SK-N-SH (cell line): ENCODE measurements at regions of chr21 and their contacts with region 1.

Region 1: GRCh38 chr21:33924079-33924765 is 8.6 kb upstream of the ATP5PO start:
- DNase-seq: peak; percentile 79
- H3K4me3 ChIP-seq: no peak overlapping the region; a peak in 1 of 4 replicates
- H3K27ac ChIP-seq: no peak overlapping the region; a peak in 1 of 4 replicates
- H3K4me1 ChIP-seq: peaks cover 5 to 10% of the 10 kb centered on the region in 2 experiments; a peak in 1 of 4 replicates
- H3K27me3 ChIP-seq: no peaks in the 10 kb centered on the region
- CTCF ChIP-seq: peak; percentile 92
- EP300 ChIP-seq: no peak
- RAD21 ChIP-seq: peak; percentile 99

Region 2: GRCh38 chr21:33947451-33948095 is 23.4 kb after region 1 on chr21:
- CTCF ChIA-PET with region 1: interaction called, 26 read pairs
- POLR2A ChIA-PET with region 1: no interaction called
- DNase-seq: peak; percentile 38
- H3K4me3 ChIP-seq: peak overlapping the region; percentile 20 to 38; a peak in 2 of 4 replicates
- H3K27ac ChIP-seq: peak overlapping the region; percentile 68 to 88; a peak in 3 of 4 replicates
- H3K4me1 ChIP-seq: peaks cover 14 to 15% of the 10 kb centered on the region in 2 experiments; a peak in 3 of 4 replicates
- H3K27me3 ChIP-seq: no peaks in the 10 kb centered on the region
- CTCF ChIP-seq: no peak
- EP300 ChIP-seq: peak in 1 of 2 experiments; percentile 75; a peak in 1 of 4 replicates
- RAD21 ChIP-seq: no peak

Region 3: DNA sequence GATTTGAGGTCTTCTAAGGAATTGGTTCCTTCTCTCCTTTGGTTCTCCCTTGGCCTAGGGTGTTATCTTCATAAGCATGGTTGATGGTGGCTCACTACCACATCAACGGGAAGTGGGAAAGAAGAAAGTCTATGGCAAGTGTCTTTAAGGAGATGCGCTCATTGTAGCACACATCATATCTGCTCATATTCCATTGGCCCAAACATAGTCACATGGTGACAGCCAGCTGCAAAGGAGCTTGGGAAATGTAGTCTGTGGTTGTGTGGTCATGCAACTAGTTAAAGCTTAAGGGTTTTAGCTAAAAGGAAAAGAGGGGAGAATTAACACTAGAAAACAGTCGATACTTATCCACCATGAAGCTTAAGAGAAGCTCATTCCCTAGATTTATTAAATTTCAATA is 137.8 kb after region 1 on chr21:
- CTCF ChIA-PET with region 1: interaction called, 12 read pairs
- POLR2A ChIA-PET with region 1: no interaction called
- DNase-seq: peak; percentile 23
- H3K4me3 ChIP-seq: no peak overlapping the region
- H3K27ac ChIP-seq: no peak overlapping the region
- H3K4me1 ChIP-seq: no peaks in the 10 kb centered on the region
- H3K27me3 ChIP-seq: no peaks in the 10 kb centered on the region
- CTCF ChIP-seq: no peak
- EP300 ChIP-seq: no peak
- RAD21 ChIP-seq: no peak

Region 4: DNA sequence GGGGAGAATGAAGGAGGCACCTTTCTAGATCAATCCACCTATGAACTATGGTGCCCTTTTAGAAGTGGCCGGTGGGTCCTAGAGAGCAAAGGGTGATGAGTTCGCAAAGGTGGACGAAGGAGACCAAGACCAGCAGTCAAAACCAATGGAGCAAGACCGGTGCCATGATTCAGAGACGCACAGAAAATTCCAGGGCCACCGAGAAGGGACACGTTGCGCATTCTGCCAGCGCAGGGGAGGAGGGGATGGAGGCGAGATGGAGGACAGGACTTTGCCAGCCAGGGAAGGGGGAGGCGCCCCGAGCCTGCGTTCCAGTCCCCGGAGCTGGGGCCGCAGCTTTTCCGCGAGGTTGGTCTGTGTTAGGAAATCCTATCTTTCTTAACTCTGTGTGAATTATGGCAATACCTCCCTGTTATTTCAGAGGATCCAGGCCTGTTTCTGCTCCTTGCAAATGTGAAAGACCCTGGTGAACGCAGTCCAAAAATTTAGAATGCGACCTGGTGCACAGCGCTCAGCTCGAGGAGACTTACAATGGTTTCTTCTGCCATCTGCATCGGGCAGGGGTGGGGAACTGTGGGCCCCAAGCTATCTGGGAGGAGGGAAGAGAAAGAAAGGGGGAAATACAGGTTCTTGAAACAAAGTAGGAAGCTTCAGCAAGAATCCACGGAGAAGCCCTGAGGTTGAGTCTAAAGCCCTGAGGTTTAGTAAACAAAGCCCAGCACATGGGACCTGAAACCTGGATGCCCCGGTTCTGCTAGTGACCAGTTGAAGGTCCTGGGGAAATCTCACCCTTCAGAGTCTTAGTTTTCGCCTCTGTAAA is 278.5 kb after region 1 on chr21:
- CTCF ChIA-PET with region 1: interaction called, 41 read pairs
- POLR2A ChIA-PET with region 1: no interaction called
- DNase-seq: peak; percentile 55
- H3K4me3 ChIP-seq: no peak overlapping the region
- H3K27ac ChIP-seq: peak overlapping the region in 1 of 2 experiments; percentile 84; a peak in 1 of 4 replicates
- H3K4me1 ChIP-seq: peaks cover 7 to 43% of the 10 kb centered on the region in 2 experiments; a peak in 2 of 4 replicates
- H3K27me3 ChIP-seq: no peaks in the 10 kb centered on the region
- CTCF ChIP-seq: no peak
- EP300 ChIP-seq: no peak
- RAD21 ChIP-seq: no peak

Region 5: GRCh38 chr21:34351786-34352241 is 427.6 kb after region 1 on chr21:
- CTCF ChIA-PET with region 1: interaction called, 407 read pairs
- POLR2A ChIA-PET with region 1: no interaction called
- DNase-seq: peak; percentile 66
- H3K4me3 ChIP-seq: no peak overlapping the region; a peak in 1 of 4 replicates
- H3K27ac ChIP-seq: no peak overlapping the region
- H3K4me1 ChIP-seq: no peaks in the 10 kb centered on the region; a peak in 1 of 4 replicates
- H3K27me3 ChIP-seq: no peaks in the 10 kb centered on the region; the same call in 1 of the 2 replicates
- CTCF ChIP-seq: peak; percentile 66
- EP300 ChIP-seq: no peak
- RAD21 ChIP-seq: peak; percentile 95

Region 6: GRCh38 chr21:34630536-34631143 is 706.4 kb after region 1 on chr21:
- CTCF ChIA-PET with region 1: interaction called, 10 read pairs
- POLR2A ChIA-PET with region 1: no interaction called
- DNase-seq: peak; percentile 63
- H3K4me3 ChIP-seq: no peak overlapping the region; a peak in 1 of 4 replicates
- H3K27ac ChIP-seq: no peak overlapping the region
- H3K4me1 ChIP-seq: no peaks in the 10 kb centered on the region
- H3K27me3 ChIP-seq: peaks cover 51% of the 10 kb centered on the region
- CTCF ChIP-seq: peak; percentile 85
- EP300 ChIP-seq: no peak
- RAD21 ChIP-seq: peak; percentile 94